Heart right ventricle (tissue), 16 donors: ENCODE measurements at regions of chr19 and their contacts with region 1.

Region 1: GRCh38 chr19:36489118-36489919 is at the start of gene ZNF566:
- DNase-seq: peak; percentile 86 to 94
- ATAC-seq: peak; percentile 96 to 99 (median 98)
- H3K4me3 ChIP-seq: peak within 1 kb of the TSS; percentile 43 to 90 (median 77)
- H3K27ac ChIP-seq: peak within 1 kb of the TSS; percentile 86 to 98 (median 94)
- H3K4me1 ChIP-seq: peaks cover 3 to 21% (median 14%) of the 10 kb centered on the region in 9 donors
- H3K27me3 ChIP-seq: no peaks in the 10 kb centered on the region
- CTCF ChIP-seq: peak in 3 of 9 donors; percentile 13 to 25 (median 25)
- total RNA-seq, gene ZNF566: 8.1 to 15.0 (median 11.4) TPM

Region 2: GRCh38 chr19:36132489-36132891 is 356.8 kb before region 1 on chr19:
- intact Hi-C with region 1: loop called in 1 of 10 experiments (anchors 5 kb)
- DNase-seq: no peak
- ATAC-seq: no peak
- H3K4me3 ChIP-seq: no peak overlapping the region
- H3K27ac ChIP-seq: peak overlapping the region in 1 of 10 donors; percentile 59
- H3K4me1 ChIP-seq: peaks cover 0 to 52% (median 19%) of the 10 kb centered on the region in 9 donors
- H3K27me3 ChIP-seq: no peaks in the 10 kb centered on the region
- CTCF ChIP-seq: no peak

Region 3: DNA sequence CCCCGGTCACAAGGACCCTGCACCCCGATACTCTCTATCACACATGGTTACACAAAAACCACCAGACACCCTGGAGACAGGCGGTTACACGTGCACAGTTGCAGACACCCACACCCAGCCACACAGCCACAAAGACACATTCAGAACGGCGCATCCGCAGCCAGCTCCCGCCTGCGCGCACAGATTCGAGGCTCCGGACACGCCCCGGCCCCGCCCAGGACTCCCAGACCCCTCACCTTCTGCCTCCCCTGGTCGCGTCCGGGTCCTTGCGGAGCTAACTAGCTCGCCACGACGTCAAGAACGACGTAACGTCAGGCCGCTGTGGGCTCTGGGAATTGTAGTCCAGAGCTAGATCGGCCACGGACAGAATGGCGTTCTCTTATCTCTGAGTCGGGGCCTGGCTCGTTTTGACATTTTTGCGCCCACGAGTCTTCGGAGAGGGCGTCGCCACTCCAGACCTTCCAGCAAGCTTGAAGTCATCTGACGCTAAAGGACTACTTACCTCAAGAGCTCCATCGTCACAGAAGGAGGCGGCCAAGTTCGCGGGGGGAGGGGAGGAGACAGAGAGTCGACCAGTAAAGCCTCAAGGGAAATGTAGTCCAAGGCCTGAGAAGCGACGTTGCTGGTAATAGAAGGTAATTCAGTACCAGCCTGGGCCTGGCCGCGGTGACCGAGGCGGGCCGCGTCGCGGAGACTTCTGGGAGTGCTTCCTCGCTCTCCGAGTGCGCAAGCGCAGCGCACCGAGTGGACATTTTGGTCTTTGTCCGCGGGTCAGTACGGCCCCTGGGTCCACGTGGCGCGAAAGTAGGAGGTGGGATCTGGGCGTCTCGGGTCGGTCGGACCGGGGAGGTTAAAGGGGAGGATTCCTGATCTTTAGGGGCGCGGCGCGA is 274.7 kb before region 1 on chr19 and contains the starts of genes ZNF146 and ZNF565:
- intact Hi-C with region 1: loop called in 1 of 10 experiments (anchors 5 kb)
- DNase-seq: peak; percentile 98
- ATAC-seq: peak; percentile 96 to 98 (median 97)
- H3K4me3 ChIP-seq: peak within 1 kb of the TSS; percentile 58 to 85 (median 76)
- H3K27ac ChIP-seq: peak within 1 kb of the TSS; percentile 88 to 96 (median 92)
- H3K4me1 ChIP-seq: peaks cover 0 to 44% (median 18%) of the 10 kb centered on the region in 9 donors
- H3K27me3 ChIP-seq: no peaks in the 10 kb centered on the region
- CTCF ChIP-seq: peak in 1 of 9 donors; percentile 8
- total RNA-seq, gene ZNF146: 25.7 to 42.1 (median 32.6) TPM
- total RNA-seq, gene ZNF565: 2.6 to 5.1 (median 3.6) TPM

Region 4: DNA sequence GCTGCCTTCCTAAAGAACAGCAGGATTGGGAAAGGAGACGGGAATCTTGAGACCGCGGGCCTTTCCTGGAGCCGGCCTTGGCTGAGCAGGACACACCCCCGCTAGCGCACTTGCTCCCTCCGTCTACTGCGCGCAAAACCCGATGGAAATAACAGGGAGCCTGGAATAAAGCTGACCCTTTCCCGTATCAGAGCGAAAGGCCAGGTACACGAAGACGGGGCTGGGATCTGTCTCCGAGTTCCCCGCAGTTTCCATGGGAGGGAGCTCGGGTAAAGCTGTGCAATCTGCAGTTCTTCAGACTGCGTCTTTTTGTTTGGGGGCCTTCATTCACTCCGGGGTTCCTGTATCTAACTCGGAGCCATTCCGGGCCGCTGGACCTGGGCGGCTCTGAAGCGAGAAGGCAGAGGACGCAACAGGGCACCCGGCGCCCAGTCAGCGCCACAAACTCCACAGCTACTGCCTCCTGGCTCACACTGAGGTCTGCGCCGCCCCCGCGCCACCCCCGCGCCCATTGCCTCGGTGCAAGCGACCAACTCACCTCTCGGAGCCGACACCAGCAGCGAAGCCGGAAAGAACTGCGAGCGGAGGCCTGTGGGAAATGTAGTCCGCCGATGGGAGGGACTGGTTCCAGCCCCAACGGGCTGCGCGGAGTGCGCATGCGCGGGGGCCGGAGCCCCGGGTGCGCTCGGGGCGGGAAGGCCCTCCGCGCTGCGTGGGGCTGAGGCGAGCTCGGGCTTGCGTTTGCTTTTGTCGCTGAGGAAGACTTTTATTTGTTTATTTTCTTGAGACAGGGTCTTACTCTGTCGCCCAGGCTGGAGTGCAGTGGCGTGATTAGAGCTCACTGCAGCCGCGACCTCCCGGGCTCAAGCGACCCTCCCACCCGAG is 110.5 kb before region 1 on chr19 and contains the start of gene ZFP14:
- intact Hi-C with region 1: loop called in 1 of 10 experiments (anchors 5 kb)
- DNase-seq: peak; percentile 93 to 94
- ATAC-seq: peak; percentile 98 to 100 (median 99)
- H3K4me3 ChIP-seq: peak within 1 kb of the TSS; percentile 54 to 86 (median 71)
- H3K27ac ChIP-seq: peak within 1 kb of the TSS; percentile 23 to 92 (median 82)
- H3K4me1 ChIP-seq: peaks cover 7 to 22% (median 11%) of the 10 kb centered on the region in 9 donors
- H3K27me3 ChIP-seq: no peaks in the 10 kb centered on the region
- CTCF ChIP-seq: peak in 6 of 9 donors; percentile 9 to 51 (median 36)
- total RNA-seq, gene ZFP14: 1.0 to 4.0 (median 2.5) TPM

Region 5: DNA sequence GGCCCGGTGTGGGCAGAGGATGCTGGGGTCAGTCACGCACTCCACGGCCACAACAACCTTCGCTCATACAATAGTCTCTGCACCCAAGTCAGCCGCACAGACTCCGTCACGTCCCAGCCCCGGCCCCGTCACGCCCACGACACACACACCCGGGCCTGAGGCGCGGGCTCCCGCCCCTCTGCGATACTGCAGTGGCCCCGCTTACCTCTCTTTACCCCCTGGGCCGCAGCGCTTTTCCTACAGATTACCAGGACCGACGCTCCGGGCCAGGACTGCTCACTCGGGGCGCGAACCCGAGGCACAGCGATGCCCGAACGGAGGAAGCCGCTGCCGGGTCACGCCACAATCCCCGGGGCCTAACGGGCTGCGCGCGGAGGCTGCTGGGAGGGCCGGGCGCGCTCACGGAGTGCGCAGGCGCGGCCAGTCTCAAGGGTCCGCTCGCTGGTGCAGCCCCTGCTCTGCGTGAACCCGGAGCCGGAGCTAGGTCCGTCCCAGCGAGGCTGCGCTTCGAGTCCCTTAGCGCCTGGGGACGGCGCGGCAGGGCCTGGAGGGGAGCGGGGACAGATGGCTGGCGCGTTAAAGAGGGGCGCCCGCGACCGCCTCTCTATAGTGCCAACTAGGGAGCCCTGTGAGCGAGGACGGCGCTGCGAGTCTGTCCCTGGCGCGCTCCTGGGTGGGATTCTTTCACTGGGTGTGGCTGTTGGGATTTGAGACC is 70.9 kb before region 1 on chr19 and contains the start of gene ZFP82:
- intact Hi-C with region 1: loop called in 4 of 10 experiments (anchors 1 to 5 kb)
- DNase-seq: peak; percentile 86 to 90
- ATAC-seq: peak; percentile 96 to 98 (median 98)
- H3K4me3 ChIP-seq: peak within 1 kb of the TSS; percentile 59 to 94 (median 78)
- H3K27ac ChIP-seq: peak within 1 kb of the TSS; percentile 86 to 96 (median 92)
- H3K4me1 ChIP-seq: peaks cover 2 to 46% (median 17%) of the 10 kb centered on the region in 9 donors
- H3K27me3 ChIP-seq: peaks cover 0 to 21% (median 0%) of the 10 kb centered on the region in 7 donors
- CTCF ChIP-seq: peak in 1 of 9 donors; percentile 12
- total RNA-seq, gene ZFP82: 3.1 to 6.3 (median 4.3) TPM

Region 6: DNA sequence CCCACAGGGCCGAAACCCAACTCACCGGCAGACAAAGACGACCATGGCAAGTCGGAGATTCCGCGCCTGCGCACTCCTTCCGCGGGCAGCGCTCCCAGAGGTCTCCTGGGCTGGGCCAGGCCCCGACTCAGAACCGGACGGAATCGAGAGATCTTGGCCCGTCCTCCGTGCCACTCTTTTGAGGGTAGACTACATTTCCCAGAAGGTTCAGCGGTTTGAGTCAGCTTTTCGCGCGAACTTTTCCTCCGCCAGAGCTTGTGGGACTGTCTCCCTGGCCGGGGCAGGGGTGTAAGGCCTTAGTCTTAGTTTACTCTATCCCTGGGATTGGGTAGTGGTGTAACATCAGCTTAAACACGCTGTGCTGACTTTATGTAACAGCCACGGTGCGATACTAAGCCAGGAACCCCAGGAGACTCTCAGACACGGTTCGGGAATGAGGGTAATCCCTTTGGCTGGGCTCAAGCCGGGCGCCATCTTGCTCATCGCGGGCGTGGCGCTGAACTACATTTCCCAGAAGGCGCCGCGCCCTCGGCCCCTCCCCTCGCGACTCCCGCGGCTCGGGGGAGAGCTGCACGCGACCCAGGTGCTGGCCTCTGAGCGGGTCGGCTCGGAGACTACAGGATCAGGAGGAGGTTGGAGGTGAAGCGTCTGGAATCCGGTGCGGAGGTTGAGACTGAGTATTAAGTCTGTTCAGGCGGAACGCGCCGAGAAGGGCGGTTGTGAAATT is 39.0 kb after region 1 on chr19 and contains the start of gene ZNF260:
- intact Hi-C with region 1: loop called in 3 of 10 experiments (anchors 2 to 5 kb)
- DNase-seq: peak; percentile 98 to 99
- ATAC-seq: peak; percentile 98 to 99 (median 99)
- H3K4me3 ChIP-seq: peak within 1 kb of the TSS; percentile 44 to 70 (median 64)
- H3K27ac ChIP-seq: peak within 1 kb of the TSS; percentile 68 to 95 (median 91)
- H3K4me1 ChIP-seq: peaks cover 0 to 28% (median 19%) of the 10 kb centered on the region in 9 donors
- H3K27me3 ChIP-seq: no peaks in the 10 kb centered on the region
- CTCF ChIP-seq: peak in 1 of 9 donors; percentile 10
- total RNA-seq, gene ZNF260: 7.2 to 12.8 (median 8.7) TPM

Region 7: GRCh38 chr19:36707134-36707533 is 217.8 kb after region 1 on chr19:
- intact Hi-C with region 1: no loop called
- DNase-seq: no peak
- ATAC-seq: no peak
- H3K4me3 ChIP-seq: no peak overlapping the region
- H3K27ac ChIP-seq: no peak overlapping the region
- H3K4me1 ChIP-seq: no peaks in the 10 kb centered on the region
- H3K27me3 ChIP-seq: no peaks in the 10 kb centered on the region
- CTCF ChIP-seq: no peak